Activated naive CD8-positive, alpha-beta T cell treated with anti-CD3 and anti-CD28 coated beads, Interleukin-2, amount 10 ng/mL, durations not matched to agents 7 days and 5 days (primary cell): ENCODE measurements at regions of chr9 and their contacts with region 1.

Region 1: DNA sequence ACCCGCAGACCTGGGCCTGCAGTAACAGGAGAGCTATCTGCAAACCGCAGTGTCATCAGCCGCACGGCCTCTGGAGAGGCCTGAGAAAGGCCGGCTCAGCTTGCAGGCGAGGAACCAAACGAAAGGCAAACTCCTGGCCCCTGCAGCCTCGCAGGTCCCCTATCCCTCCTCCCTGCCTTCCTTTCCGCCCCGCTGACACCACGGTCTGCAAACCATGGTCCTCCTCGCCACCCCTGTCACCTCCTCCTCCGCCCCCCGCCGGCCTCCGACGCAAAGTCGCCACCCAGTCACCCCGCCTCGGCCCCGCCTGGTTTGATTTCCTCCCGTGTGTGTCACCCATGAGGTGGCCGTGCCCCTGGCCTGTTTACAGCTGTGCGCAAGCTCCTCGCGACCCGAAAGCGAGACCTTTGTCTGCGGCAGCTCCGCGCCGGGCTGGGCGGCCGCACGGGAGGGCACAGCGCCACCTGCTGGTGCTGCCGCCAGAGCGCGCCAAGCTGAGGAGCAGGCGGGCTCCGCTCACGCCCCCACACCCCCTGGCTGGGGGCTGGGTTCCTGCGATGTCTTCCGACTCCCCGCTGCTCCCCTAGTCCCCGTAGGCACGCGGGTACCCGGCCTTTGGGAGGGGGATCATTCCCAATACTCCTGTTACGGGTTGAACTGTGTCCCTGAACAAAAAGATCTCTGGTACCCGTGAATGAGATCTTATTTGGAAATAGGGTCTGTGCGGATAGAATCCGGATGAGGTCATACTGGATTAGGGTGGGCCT is 19.4 kb downstream of the GBGT1 start:
- DNase-seq: peak; percentile 94
- ATAC-seq: peak; percentile 81
- H3K4me3 Mint-ChIP-seq: peak overlapping the region; percentile 81
- H3K27ac Mint-ChIP-seq: peak overlapping the region; percentile 89
- H3K4me1 Mint-ChIP-seq: peaks cover 51% of the 10 kb centered on the region
- H3K27me3 Mint-ChIP-seq: no peaks in the 10 kb centered on the region

Region 2: DNA sequence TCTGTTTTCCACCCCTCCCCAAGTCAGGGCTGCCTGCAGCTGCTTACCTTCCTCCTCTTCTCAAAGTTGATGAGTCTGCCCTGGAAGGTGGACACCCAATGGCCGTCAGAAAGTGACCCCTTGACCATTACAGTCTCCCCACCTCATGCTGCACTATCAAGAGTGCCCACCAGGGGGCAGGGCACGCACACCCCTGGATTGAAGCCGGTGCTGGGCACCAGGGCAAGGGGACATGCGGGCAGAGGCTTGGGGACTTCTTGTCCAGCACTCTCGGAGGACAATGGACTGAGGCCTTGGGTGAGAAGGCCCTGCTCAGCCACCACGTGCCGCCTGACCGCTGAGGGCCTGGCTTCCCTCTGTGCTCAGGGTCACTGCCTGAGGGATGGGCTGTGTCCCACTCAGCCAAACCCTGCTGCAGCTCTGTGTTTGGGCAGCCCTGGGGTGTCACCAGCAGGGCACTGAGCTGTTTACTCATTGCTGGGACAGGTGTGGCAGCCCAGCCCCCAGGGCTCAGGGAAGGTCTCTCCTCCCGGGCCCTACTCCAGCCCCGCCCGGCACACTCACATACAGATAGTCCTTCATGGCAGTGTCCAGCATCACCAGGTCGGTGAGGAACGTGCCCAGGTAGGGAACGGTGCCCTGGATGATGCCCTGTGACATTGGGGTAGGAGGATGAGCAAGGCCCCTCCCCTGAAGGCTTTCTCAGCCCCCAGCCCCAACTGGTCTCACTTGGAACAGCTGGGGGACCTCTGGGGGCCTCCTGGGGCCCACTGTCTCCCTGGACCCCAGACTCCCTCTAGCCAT is 40.9 kb before region 1 on chr9:
- POLR2A ChIA-PET with region 1: interaction called, 12 read pairs
- DNase-seq: peak; percentile 70
- ATAC-seq: peak; percentile 55
- H3K4me3 Mint-ChIP-seq: no peak overlapping the region
- H3K27ac Mint-ChIP-seq: no peak overlapping the region
- H3K4me1 Mint-ChIP-seq: peaks cover 4% of the 10 kb centered on the region
- H3K27me3 Mint-ChIP-seq: no peaks in the 10 kb centered on the region

Region 3: GRCh38 chr9:133115448-133116345 is 28.6 kb before region 1 on chr9:
- POLR2A ChIA-PET with region 1: interaction called, 22 read pairs
- DNase-seq: no peak
- ATAC-seq: peak; percentile 73
- H3K4me3 Mint-ChIP-seq: peak overlapping the region; percentile 5
- H3K27ac Mint-ChIP-seq: peak overlapping the region; percentile 70
- H3K4me1 Mint-ChIP-seq: peaks cover 39% of the 10 kb centered on the region
- H3K27me3 Mint-ChIP-seq: no peaks in the 10 kb centered on the region

Region 4: GRCh38 chr9:133133681-133134418 is 10.5 kb before region 1 on chr9:
- POLR2A ChIA-PET with region 1: interaction called, 53 read pairs
- DNase-seq: peak; percentile 79
- ATAC-seq: peak; percentile 88
- H3K4me3 Mint-ChIP-seq: peak overlapping the region; percentile 70
- H3K27ac Mint-ChIP-seq: peak overlapping the region; percentile 99
- H3K4me1 Mint-ChIP-seq: peaks cover 53% of the 10 kb centered on the region
- H3K27me3 Mint-ChIP-seq: no peaks in the 10 kb centered on the region